ENCODE measurements at regions of chr17 and their contacts with region 1.

Region 1: GRCh38 chr17:8435245-8436168 is at the start of gene NDEL1:
- DNase-seq: peak; percentile 99
- H3K27ac ChIP-seq: peak within 1 kb of the TSS; percentile 92
- CTCF ChIP-seq: no peak

Region 2: DNA sequence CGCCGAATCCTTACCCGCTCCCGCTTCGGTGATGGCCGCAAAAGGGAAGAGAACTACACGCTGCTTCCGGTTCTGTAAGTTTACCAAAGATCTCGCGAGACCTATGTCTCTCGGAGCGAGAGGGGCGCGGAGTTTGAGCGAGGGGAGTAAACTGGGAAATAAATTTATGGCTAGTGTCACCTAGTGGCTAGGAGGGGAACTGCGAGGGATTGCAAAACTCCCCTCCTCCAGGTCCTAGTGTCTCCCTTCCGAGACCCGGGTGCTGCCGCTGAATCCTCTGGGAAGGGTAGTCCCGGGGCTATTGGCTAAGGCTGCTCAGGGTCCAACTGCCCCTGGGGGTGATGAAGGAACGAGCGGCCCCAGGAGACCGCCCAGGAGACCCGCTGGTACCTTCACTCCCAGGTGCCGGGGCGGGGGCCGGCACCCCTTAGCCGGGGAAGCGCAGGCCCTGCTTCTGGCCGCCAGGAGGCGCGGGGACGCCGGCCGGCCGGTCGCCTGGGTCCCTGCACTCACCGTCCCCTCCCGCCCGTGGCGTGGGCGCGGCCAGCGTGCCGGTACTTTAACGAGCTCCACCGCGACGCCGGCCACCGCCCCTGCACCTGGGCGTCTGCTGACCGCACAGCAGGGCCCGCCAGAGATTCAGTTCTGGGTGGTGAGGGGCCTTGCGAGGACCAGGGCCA is 52.2 kb before region 1 on chr17 and contains the start of gene RPL26:
- CTCF ChIA-PET with region 1: no interaction called
- POLR2A ChIA-PET with region 1: interaction called, 10 read pairs
- DNase-seq: peak; percentile 95
- H3K27ac ChIP-seq: peak within 1 kb of the TSS; percentile 88
- CTCF ChIP-seq: peak; percentile 99